ENCODE measurements at regions of chr5 and their contacts with region 1.

Region 1: DNA sequence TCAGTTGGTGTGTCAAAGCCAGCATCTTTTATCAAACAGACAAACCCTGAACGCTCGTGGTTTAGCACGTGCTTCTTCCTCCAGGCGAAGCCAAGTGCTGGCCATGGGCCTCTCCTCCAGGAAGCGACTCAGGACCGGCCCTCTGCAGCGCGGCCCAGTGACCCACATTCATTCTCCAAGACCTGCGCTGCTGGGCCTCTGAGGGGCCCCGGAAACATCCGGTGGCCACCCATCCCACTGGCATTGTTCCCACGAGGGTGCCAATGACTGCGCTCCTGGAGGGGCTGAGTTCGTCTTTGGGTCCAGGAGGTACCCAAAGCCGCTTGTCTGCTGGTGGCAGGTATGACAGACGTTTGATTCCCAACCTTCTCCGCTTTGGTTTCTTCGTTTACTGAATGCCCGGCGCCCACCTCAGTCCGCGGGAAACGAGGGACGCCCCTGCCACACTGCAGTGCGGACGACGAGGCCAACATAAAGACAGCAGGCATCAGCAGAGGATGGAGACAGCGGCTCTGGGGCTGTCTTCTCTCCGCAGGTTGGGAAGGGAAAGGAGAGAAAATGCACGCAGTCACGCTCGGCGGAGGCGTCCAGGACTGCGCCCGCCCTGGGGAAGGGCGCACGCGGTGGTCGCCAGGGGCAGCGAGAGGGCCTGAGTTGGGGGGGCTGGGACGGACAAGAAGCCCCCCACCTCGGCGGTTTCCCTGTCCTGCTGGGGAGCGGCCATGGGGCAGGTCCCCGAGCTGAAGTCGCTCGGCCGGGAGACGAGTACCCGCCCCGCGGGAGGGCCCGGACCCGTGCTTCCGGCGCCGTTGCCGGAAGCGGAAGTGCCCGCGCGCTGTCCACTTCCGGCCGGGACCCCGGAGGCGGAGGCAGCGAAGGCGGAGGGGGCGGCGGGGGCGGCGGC is at the start of gene EXOC3:
- DNase-seq: peak; percentile 56 to 78
- H3K4me3 ChIP-seq: peak within 1 kb of the TSS; percentile 97
- H3K4me3 Mint-ChIP-seq: peak within 1 kb of the TSS; percentile 89
- H3K27ac Mint-ChIP-seq: peak within 1 kb of the TSS; percentile 84
- H3K4me1 ChIP-seq: no peaks in the 10 kb centered on the region
- H3K4me1 Mint-ChIP-seq: no peaks in the 10 kb centered on the region
- H3K27me3 ChIP-seq: no peaks in the 10 kb centered on the region
- H3K27me3 Mint-ChIP-seq: peaks cover 2% of the 10 kb centered on the region
- CTCF ChIP-seq: no peak
- total RNA-seq, gene EXOC3: 41.9 and 44.5 TPM in 2 replicates

Region 2: GRCh38 chr5:472656-473553 is 30.3 kb after region 1 on chr5:
- CTCF ChIA-PET with region 1: interaction called, 10 read pairs
- POLR2A ChIA-PET with region 1: interaction called, 4 read pairs
- intact Hi-C with region 1: no loop called
- DNase-seq: peak; percentile 77 to 90
- H3K4me3 ChIP-seq: peak overlapping the region; percentile 98
- H3K4me3 Mint-ChIP-seq: peak overlapping the region; percentile 85
- H3K27ac Mint-ChIP-seq: peak overlapping the region; percentile 87
- H3K4me1 ChIP-seq: no peaks in the 10 kb centered on the region
- H3K4me1 Mint-ChIP-seq: peaks cover 7% of the 10 kb centered on the region
- H3K27me3 ChIP-seq: no peaks in the 10 kb centered on the region
- H3K27me3 Mint-ChIP-seq: no peaks in the 10 kb centered on the region
- CTCF ChIP-seq: no peak

Region 3: GRCh38 chr5:502325-503079 is 59.9 kb after region 1 on chr5:
- CTCF ChIA-PET with region 1: no interaction called
- POLR2A ChIA-PET with region 1: no interaction called
- intact Hi-C with region 1: no loop called
- DNase-seq: no peak
- H3K4me3 ChIP-seq: no peak overlapping the region
- H3K4me3 Mint-ChIP-seq: no peak overlapping the region
- H3K27ac Mint-ChIP-seq: no peak overlapping the region
- H3K4me1 ChIP-seq: peaks cover 10% of the 10 kb centered on the region
- H3K4me1 Mint-ChIP-seq: peaks cover 12% of the 10 kb centered on the region
- H3K27me3 ChIP-seq: no peaks in the 10 kb centered on the region
- H3K27me3 Mint-ChIP-seq: no peaks in the 10 kb centered on the region
- CTCF ChIP-seq: no peak

Region 4: GRCh38 chr5:611721-612486 is 169.3 kb after region 1 on chr5 and contains the start of gene CEP72:
- CTCF ChIA-PET with region 1: interaction called, 3 read pairs
- POLR2A ChIA-PET with region 1: no interaction called
- intact Hi-C with region 1: loop called (anchors 10 kb)
- DNase-seq: peak; percentile 91 to 92
- H3K4me3 ChIP-seq: peak within 1 kb of the TSS; percentile 85
- H3K4me3 Mint-ChIP-seq: peak within 1 kb of the TSS; percentile 93
- H3K27ac Mint-ChIP-seq: peak within 1 kb of the TSS; percentile 90
- H3K4me1 ChIP-seq: peaks cover 4% of the 10 kb centered on the region; the same call in 1 of the 2 replicates
- H3K4me1 Mint-ChIP-seq: peaks cover 13% of the 10 kb centered on the region
- H3K27me3 ChIP-seq: no peaks in the 10 kb centered on the region
- H3K27me3 Mint-ChIP-seq: no peaks in the 10 kb centered on the region
- CTCF ChIP-seq: no peak
- total RNA-seq, gene CEP72: 36.6 and 38.7 TPM in 2 replicates